ENCODE measurements at regions of chr1 and their contacts with region 1.

Region 1: GRCh38 chr1:116754198-116754977 is at the start of gene CD2:
- DNase-seq: peak; percentile 79
- ATAC-seq: peak; percentile 75
- H3K4me3 Mint-ChIP-seq: peak within 1 kb of the TSS; percentile 99
- H3K27ac Mint-ChIP-seq: peak within 1 kb of the TSS; percentile 98
- H3K4me1 Mint-ChIP-seq: peaks cover 42% of the 10 kb centered on the region
- H3K27me3 Mint-ChIP-seq: no peaks in the 10 kb centered on the region
- total RNA-seq, gene CD2: 186 to 189 TPM

Region 2: DNA sequence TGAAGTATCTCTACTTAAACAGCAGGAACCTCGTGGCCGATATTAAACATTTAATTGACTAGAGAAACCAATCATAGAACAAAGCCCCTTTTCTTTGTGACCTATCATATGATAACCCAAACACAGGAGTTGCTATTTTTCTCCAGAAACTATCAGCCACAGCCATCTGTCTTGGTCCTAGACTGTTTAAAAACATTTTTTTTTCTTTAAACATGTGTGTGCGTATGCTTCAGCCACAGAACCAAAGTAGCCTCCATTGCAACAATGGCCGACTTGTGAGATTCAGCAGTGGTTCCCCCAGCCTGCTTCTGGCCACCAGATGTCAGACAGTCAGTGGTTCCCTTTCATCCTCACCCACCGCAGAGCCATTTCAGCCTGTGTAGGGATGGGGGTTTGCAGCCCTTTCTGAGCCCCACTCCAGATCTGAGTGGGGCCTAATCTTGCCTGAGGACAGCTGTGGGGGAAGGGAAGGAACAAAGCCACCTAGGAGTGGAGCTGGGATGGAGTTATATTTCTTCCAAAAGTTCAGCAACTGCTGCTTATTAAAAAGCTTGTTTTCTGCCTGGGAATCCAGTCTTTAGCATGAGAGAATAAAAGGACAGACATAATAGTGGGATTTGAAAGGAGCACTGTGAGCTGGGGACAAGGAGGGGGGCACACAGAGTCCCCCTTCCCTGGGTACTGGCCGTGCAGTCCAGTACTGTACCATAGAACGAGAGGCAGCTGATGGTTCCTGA is 75.1 kb before region 1 on chr1:
- CTCF ChIA-PET with region 1: no interaction called
- POLR2A ChIA-PET with region 1: no interaction called
- DNase-seq: no peak
- ATAC-seq: no peak
- H3K4me3 Mint-ChIP-seq: no peak overlapping the region
- H3K27ac Mint-ChIP-seq: no peak overlapping the region
- H3K4me1 Mint-ChIP-seq: no peaks in the 10 kb centered on the region
- H3K27me3 Mint-ChIP-seq: peaks cover 31% of the 10 kb centered on the region

Region 3: DNA sequence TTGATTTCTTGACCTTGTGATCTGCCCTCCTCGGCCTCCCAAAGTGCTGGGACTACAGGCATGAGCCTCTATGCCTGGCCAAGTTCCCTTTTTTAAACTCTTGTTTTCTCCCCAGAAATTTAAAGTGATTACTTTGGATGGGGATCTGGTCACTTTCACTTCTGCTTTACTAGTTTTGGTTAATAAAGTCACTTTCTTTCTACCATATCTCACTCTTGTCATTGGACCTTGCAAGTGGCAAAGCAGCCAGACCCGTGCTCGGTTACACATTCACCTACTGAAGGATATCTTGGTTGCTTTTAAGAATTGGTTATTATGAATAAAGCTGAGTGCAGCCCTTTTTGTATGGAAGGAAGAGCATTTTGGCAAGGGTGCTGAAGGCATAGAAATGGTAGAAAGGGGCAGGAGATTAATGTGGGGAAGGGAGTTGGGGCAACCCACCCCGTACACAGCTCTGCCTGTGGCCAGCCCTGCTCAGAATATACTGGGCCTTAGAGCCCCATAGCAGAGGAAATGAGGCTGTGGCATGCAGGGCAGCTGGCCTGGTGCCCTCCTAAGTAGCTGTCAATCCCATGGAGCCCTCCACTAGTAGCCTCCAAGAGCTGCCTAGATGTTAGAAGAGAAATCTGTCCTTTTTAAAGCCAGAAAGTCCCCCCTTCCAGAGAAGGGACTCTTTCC is 40.6 kb after region 1 on chr1:
- CTCF ChIA-PET with region 1: no interaction called
- POLR2A ChIA-PET with region 1: interaction called, 377 read pairs
- DNase-seq: no peak
- ATAC-seq: no peak
- H3K4me3 Mint-ChIP-seq: no peak overlapping the region
- H3K27ac Mint-ChIP-seq: no peak overlapping the region
- H3K4me1 Mint-ChIP-seq: peaks cover 73% of the 10 kb centered on the region
- H3K27me3 Mint-ChIP-seq: no peaks in the 10 kb centered on the region

Region 4: GRCh38 chr1:116806245-116806644 is 51.9 kb after region 1 on chr1:
- CTCF ChIA-PET with region 1: interaction called, 10 read pairs
- POLR2A ChIA-PET with region 1: interaction called, 377 read pairs
- DNase-seq: peak; percentile 56
- ATAC-seq: peak; percentile 35
- H3K4me3 Mint-ChIP-seq: peak overlapping the region; percentile 58
- H3K27ac Mint-ChIP-seq: peak overlapping the region; percentile 92
- H3K4me1 Mint-ChIP-seq: peaks cover 91% of the 10 kb centered on the region
- H3K27me3 Mint-ChIP-seq: no peaks in the 10 kb centered on the region

Measured in activated CD8-positive, alpha-beta T cell treated with anti-CD3 and anti-CD28 coated beads, Interleukin-2, amount 10 ng/mL, durations not matched to agents 7 days and 5 days (primary cell).